ENCODE measurements at regions of chr3 and their contacts with region 1.

Region 1: GRCh38 chr3:50623840-50624474 is 7.0 kb downstream of the MAPKAPK3 start:
- DNase-seq: no peak
- H3K4me3 ChIP-seq: no peak overlapping the region
- CTCF ChIP-seq: no peak
- POLR2A ChIP-seq: no peak

Region 2: DNA sequence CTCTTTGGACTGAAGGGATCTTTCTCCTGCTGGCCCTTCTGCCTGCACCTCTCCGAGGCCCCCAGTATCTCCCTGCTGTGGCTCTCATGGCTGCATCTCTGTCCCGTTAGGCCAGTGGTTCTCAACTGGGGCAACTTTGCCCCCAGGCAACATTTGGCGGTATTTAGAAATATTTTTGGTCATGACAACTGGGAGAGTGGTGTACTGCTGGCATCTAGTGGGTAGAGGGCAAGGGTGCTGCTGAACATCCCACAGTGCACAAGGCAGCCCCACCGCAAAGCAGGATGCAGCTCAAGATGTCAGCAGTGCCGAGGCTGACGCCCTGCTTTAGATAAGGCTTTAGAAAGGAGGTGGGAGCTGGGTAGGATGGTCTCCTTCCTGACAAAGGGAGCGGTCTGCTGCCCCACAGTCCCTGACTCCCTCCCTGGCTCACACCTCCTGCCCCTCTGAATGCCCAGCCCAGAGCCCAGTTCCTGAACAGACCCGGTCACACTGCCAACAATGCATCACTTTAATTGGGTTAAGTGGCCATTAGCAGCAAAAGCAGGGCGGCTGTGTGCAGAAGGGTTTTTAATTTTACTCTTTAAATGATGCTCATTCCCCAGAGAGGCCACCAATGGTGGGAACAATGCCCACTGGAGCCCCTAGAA is 195.8 kb before region 1 on chr3:
- intact Hi-C with region 1: no loop called
- DNase-seq: no peak
- H3K4me3 ChIP-seq: no peak overlapping the region
- CTCF ChIP-seq: no peak
- POLR2A ChIP-seq: no peak

Region 3: DNA sequence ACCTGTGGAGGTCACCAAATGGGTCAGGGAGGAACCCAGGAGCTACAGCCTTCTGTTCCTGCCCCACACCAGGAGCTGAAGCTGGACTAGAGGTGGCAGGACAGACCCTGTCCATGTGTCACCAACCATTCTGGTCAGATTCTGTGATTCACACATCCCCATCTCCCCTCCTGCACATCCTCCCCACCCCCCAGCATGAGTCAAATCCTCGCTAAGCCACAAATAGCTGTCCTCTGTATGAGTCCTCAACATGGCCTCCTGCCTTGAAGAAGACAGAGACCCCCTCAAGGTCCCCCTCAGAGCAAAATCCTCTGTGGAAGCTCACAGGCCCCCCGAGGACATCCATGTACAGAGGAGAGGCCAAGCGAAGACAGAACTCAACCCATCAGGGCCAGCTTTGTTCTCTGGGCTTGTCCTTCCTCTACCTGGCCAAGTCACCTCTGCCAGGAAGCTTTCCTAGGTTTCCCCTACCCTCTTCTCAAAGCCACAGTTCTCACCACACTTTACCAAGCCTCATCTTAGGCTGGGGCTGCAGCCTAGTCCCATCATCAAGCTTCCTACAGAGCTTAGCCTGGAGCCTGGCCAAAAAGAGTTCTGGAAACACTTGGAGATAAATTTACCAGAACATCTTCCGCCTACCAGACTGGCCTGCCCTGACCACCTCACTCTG is 137.6 kb before region 1 on chr3:
- intact Hi-C with region 1: no loop called
- DNase-seq: no peak
- H3K4me3 ChIP-seq: no peak overlapping the region
- CTCF ChIP-seq: no peak
- POLR2A ChIP-seq: no peak

Region 4: DNA sequence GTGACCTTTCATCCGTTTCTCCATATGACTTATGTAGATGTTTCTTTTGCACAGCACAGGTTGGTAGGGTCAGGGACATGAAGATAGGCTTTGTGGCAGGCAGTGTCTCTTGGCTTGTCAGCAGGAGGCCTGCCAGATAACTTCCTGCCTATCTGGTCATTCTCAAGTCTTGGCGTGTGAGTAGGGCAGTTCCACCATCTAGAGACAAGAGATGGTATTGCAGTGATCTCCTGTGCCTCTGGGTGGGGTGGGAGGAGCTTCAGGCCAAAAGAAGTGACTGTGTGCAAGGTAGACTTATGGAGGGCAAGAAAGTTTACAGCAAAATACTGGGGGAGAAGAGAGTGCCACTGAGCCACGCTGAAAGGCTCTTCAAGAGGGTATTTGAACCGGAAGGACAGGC is 1058.1 kb after region 1 on chr3:
- intact Hi-C with region 1: loop called (anchors 5 kb)
- DNase-seq: peak; percentile 82 to 90
- H3K4me3 ChIP-seq: no peak overlapping the region
- CTCF ChIP-seq: peak in 1 of 3 donors; percentile 49
- POLR2A ChIP-seq: no peak